ENCODE measurements at regions of chr2 and their contacts with region 1.

Region 1: GRCh38 chr2:31170071-31170698 is 31.9 kb upstream of the GALNT14 start:
- DNase-seq: peak; percentile 80
- H3K4me3 ChIP-seq: no peak overlapping the region
- H3K27ac ChIP-seq: no peak overlapping the region
- H3K4me1 ChIP-seq: peaks cover 0 to 4% (median 0%) of the 10 kb centered on the region in 6 donors
- H3K27me3 ChIP-seq: no peaks in the 10 kb centered on the region
- CTCF ChIP-seq: peak; percentile 80 to 92 (median 89)
- POLR2A ChIP-seq: no peak

Region 2: DNA sequence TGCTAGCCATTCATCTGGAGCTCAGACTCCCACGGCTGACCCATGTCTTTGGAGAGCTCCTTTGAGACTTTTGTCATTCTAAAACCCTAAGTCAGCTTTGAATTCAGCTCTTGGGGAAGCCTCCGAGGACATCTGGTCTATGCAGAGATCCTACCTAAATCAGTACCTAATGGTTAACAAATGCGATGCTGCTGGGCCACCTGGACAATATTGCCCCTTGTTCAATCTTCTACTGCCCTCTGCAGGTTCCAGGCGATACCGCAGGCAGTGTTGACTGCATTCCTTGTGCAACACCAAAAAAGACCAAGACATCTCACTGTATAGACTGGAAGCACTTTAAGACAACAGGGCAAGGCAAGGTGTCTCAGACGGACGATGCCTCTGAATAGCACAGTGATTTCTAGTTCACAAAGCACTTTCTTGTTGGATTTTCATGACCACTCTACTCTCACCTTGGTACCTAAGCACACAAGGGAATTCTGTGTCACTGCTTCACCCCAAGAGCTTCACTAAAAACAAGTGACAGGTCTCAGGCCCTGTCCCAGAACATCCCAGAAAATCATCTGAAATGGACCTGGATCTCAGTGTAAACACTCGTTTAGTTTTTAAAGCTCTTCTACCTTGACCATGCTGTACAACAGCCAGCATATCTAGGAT is 163.5 kb after region 1 on chr2:
- intact Hi-C with region 1: loop called (anchors 5 kb)
- DNase-seq: peak; percentile 90
- H3K4me3 ChIP-seq: no peak overlapping the region
- H3K27ac ChIP-seq: no peak overlapping the region
- H3K4me1 ChIP-seq: peaks cover 0 to 5% (median 2%) of the 10 kb centered on the region in 6 donors
- H3K27me3 ChIP-seq: peaks cover 0 to 8% (median 0%) of the 10 kb centered on the region in 7 donors
- CTCF ChIP-seq: peak; percentile 89 to 97 (median 95)
- POLR2A ChIP-seq: no peak

Measured in spleen (tissue), 13 donors.